ENCODE measurements at regions of chr20 and their contacts with region 1.

Region 1: DNA sequence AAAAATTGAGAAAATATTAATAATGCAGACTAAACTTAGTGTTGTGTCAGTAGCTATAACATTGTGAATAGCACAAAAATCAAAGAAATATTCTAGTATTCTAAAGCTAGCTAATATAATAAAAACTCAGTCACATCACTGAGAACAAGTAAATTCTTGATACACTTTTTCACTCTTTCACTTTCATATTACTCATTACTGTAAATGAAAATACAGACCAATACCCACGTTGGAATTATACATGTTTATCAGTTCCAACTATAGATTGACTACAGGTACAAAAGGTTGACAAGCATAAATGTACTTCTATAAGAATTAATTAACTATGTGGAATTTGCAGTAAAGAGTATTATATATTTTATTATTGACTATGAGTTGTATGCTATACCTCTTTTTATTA is 1043.4 kb upstream of the FLRT3 start:
- DNase-seq: no peak
- ATAC-seq: no peak
- H3K4me3 ChIP-seq: no peak overlapping the region
- H3K27ac ChIP-seq: no peak overlapping the region
- H3K4me1 ChIP-seq: no peaks in the 10 kb centered on the region
- H3K27me3 ChIP-seq: no peaks in the 10 kb centered on the region
- CTCF ChIP-seq: no peak
- POLR2A ChIP-seq: no peak

Region 2: DNA sequence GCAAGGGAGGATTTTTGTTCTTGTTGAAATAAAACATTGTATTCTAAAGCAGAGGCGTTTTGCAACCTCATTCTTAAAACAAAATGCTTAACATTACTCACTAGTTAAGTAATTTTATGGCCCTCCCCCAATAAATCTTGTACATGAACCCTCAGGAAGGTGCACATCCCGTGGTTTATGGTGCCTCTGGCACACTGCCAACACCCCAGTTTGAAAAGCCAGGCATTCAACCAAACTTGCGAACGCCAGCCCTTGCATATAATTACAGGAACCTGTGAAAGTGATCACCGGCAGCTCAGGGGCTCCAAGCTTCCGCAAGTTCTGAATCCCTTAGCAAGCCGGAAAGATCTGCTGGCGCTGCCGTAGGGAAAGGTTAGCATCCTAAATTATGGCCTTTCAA is 65.6 kb after region 1 on chr20:
- intact Hi-C with region 1: loop called in 1 of 10 experiments (anchors 10 kb)
- DNase-seq: peak in 4 of 5 donors; percentile 26 to 32 (median 28)
- ATAC-seq: no peak
- H3K4me3 ChIP-seq: no peak overlapping the region
- H3K27ac ChIP-seq: no peak overlapping the region
- H3K4me1 ChIP-seq: no peaks in the 10 kb centered on the region
- H3K27me3 ChIP-seq: no peaks in the 10 kb centered on the region
- CTCF ChIP-seq: no peak
- POLR2A ChIP-seq: no peak

Region 3: DNA sequence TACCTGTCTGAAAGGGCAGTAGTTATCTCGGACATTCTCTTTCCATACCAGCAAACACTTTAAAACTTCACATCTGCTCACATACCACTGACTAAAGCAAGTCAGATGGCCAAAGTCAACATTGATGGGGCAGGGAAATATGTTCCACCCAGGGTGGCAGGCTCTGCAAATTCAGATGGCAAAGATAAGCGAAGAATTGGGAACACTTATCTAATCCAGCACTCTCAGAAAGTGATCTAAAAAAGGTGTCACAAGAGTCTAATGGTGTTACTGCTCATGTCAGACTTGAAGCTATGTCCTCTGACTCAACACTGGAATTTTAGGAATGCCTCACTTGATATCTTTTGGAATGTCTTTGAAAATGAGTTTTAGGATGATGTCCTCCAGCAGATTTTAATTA is 106.3 kb after region 1 on chr20:
- intact Hi-C with region 1: no loop called
- DNase-seq: no peak
- ATAC-seq: no peak
- H3K4me3 ChIP-seq: no peak overlapping the region
- H3K27ac ChIP-seq: no peak overlapping the region
- H3K4me1 ChIP-seq: no peaks in the 10 kb centered on the region
- H3K27me3 ChIP-seq: no peaks in the 10 kb centered on the region
- CTCF ChIP-seq: no peak
- POLR2A ChIP-seq: no peak